A549 (cell line): ENCODE measurements at regions of chr1 and their contacts with region 1.

Region 1: DNA sequence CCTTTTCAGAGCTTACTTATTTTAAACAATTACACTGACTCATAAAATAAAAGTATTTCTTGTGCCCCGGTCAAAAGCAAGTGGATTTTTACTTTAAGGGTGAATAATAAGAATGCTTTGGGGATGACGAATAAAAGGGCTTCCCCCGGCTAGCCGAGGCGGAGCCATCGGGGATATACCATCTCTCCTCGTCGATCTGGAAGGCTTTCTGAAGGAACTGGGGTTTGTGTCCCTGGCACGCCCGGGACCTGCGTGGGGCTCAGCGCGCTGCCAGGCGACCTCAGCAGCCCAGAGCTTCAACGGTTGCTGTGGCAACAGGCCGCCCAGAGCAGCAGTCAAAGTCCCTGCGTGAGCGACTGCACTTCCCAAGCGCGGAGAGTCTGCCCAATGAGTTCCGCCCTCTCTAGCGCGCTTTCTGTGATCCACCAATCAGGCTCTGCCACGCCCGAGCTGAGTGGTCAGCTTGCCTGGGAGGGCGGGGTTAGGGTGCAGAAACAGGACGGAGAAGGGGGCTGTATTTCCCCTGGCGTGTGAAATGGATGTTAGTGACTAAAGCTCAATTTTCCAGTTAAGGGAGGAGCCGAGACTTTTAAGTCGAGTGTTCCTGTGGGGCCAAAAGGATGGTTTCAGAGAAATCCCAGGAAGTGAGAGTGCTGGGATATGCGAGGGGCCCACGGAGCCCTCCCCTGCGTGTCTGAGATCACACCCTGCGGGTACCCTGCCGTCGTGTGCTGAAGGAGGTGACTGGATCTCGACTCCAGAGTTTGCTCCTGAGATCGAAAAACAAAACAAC is 33.0 kb upstream of the MGST3 start:
- DNase-seq: peak; percentile 87 to 95
- ATAC-seq: peak; percentile 98 to 99
- H3K4me3 ChIP-seq: peak overlapping the region; percentile 58
- H3K27ac ChIP-seq: peak overlapping the region; percentile 64 to 80
- H3K4me1 ChIP-seq: no peaks in the 10 kb centered on the region
- CTCF ChIP-seq: no peak
- EP300 ChIP-seq: no peak
- POLR2A ChIP-seq: no peak; the same call in 1 of the 2 replicates
- RAD21 ChIP-seq: no peak

Region 2: DNA sequence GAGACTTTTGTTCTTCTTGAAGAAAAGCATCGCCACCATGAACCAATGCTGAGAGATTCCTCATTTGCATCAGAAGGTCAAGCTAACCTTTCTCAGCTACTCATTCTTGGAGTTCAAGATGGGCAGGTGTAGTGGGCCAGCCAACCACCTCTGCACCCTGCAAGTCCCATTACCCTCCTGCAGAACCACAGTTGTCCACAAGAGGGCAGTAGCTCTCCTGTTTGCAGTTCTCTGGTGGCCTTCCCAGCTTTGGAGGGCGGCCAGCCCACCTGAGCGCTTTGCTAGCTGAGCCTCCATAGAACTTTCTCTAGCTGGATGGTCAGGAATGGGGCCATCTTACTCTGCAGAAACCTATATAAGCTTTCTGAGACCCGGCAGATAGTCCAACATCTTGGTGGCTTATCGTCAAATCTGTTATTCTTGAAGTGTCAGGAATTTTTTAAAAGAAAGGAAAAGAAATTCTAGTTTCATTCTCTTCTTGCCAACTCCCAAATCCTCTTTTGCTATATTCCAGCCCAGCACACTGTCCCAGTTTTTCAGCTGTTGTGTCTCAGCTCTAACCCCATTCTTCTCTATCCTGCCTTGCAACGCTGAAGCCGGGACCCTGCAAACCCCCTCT is 230.6 kb before region 1 on chr1:
- CTCF ChIA-PET with region 1: interaction called, 39 read pairs
- POLR2A ChIA-PET with region 1: no interaction called
- DNase-seq: peak; percentile 71 to 74
- ATAC-seq: peak; percentile 65 to 89; a peak in 5 of 6 replicates
- H3K4me3 ChIP-seq: no peak overlapping the region
- H3K27ac ChIP-seq: no peak overlapping the region
- H3K4me1 ChIP-seq: no peaks in the 10 kb centered on the region
- CTCF ChIP-seq: peak; percentile 75
- EP300 ChIP-seq: no peak
- POLR2A ChIP-seq: no peak
- RAD21 ChIP-seq: peak; percentile 46 to 48; a peak in 4 of 5 replicates

Region 3: GRCh38 chr1:165403835-165404482 is 194.1 kb before region 1 on chr1:
- CTCF ChIA-PET with region 1: interaction called, 219 read pairs
- POLR2A ChIA-PET with region 1: no interaction called
- DNase-seq: peak; percentile 21 to 28
- ATAC-seq: peak; percentile 80 to 87
- H3K4me3 ChIP-seq: no peak overlapping the region
- H3K27ac ChIP-seq: no peak overlapping the region
- H3K4me1 ChIP-seq: no peaks in the 10 kb centered on the region
- CTCF ChIP-seq: peak; percentile 60
- EP300 ChIP-seq: no peak
- POLR2A ChIP-seq: no peak
- RAD21 ChIP-seq: peak; percentile 75 to 76

Region 4: GRCh38 chr1:165580941-165581871 is 16.9 kb before region 1 on chr1:
- CTCF ChIA-PET with region 1: interaction called, 22 read pairs
- POLR2A ChIA-PET with region 1: no interaction called
- DNase-seq: no peak
- ATAC-seq: 0 out of 6 replicates have a peak, but pooled peaks of 1 of the 2 experiments have one; percentile 32
- H3K4me3 ChIP-seq: no peak overlapping the region
- H3K27ac ChIP-seq: no peak overlapping the region
- H3K4me1 ChIP-seq: no peaks in the 10 kb centered on the region
- CTCF ChIP-seq: no peak
- EP300 ChIP-seq: no peak
- POLR2A ChIP-seq: no peak
- RAD21 ChIP-seq: no peak

Region 5: DNA sequence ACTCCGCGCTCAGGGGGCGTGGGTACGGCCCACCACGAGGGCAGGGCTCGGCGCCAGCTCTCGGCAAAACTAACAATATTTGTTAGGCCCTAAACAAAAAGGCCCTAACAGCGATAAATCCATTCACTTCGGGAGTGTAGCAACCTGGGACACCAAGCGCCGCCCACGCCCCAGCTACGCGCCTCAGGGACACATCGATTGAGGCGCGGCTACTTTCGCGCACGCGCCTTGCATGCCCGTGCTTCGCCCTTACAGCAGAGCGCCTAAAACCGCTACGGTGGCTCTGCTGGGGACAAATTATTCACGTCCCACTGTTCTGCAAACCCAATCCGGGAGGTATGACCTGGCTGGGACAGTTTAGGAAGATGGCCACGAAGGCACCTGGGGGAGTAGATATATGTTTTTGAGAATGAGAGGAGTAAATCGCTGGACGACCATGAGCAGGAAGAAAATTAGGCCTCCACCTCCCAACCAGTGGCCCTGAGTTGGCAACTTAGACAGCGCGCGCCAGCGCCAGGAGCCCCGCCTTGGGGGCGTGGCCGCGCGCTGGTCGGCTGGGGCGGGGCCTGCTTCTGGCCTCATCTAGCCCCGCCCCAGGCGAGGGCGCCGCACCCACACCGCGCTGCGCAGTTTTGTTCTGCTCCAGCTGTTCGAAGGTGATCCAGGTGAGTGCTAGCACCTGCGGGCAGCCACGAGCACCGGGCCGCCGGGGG is 32.7 kb after region 1 on chr1 and contains the start of gene MGST3:
- CTCF ChIA-PET with region 1: interaction called, 12 read pairs
- POLR2A ChIA-PET with region 1: interaction called, 5 read pairs
- DNase-seq: peak; percentile 96 to 98
- ATAC-seq: peak; percentile 84 to 94
- H3K4me3 ChIP-seq: peak within 1 kb of the TSS; percentile 72
- H3K27ac ChIP-seq: peak within 1 kb of the TSS; percentile 86 to 92
- H3K4me1 ChIP-seq: peaks cover 40% of the 10 kb centered on the region
- CTCF ChIP-seq: no peak
- EP300 ChIP-seq: 0 out of 5 replicates have a peak, but pooled peaks of 1 of the 2 experiments have one; percentile 16
- POLR2A ChIP-seq: peak; percentile 63
- RAD21 ChIP-seq: no peak
- polyA plus RNA-seq, gene MGST3: 216 and 245 TPM in 2 replicates

Region 6: GRCh38 chr1:165914136-165914798 is 316.2 kb after region 1 on chr1:
- CTCF ChIA-PET with region 1: interaction called, 78 read pairs
- POLR2A ChIA-PET with region 1: no interaction called
- DNase-seq: peak; percentile 76 to 79
- ATAC-seq: peak; percentile 75 to 85
- H3K4me3 ChIP-seq: no peak overlapping the region
- H3K27ac ChIP-seq: no peak overlapping the region
- H3K4me1 ChIP-seq: peaks cover 8% of the 10 kb centered on the region; the same call in 1 of the 3 replicates
- CTCF ChIP-seq: peak; percentile 93
- EP300 ChIP-seq: no peak
- POLR2A ChIP-seq: no peak
- RAD21 ChIP-seq: peak; percentile 96 to 98